SK-N-SH (cell line): ENCODE measurements at regions of chr7 and their contacts with region 1.

Region 1: DNA sequence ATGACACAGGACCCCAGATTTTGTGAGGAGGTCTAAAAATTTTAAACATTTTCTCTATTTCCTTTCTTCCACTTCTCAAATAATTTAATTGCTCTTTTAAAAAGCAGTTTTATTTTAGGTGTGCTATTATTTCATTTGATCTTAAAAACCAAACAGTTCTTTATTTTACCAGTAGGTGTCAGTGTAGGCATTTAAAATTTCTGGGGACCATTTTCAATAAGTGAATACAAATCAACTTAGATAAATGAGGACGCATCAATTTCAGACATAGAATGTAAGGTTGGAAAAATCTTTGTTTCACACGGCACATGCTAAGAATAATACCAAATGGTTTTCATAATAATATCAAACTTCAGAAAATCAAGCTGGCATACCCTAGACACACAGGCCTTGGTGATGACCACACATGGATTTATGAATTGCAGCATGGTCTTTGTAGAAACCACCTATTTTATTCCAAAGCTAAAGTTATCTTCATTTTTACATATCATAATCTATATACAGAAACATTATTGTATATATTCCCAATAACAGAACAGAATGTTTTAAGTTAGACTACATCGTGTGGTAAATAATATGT is 127.6 kb upstream of the SLC26A5 start:
- DNase-seq: peak; percentile 27
- H3K4me3 ChIP-seq: no peak overlapping the region; a peak in 1 of 4 replicates
- H3K27ac ChIP-seq: no peak overlapping the region
- H3K4me1 ChIP-seq: no peaks in the 10 kb centered on the region
- H3K27me3 ChIP-seq: no peaks in the 10 kb centered on the region
- CTCF ChIP-seq: peak; percentile 95
- EP300 ChIP-seq: no peak
- RAD21 ChIP-seq: peak; percentile 85

Region 2: DNA sequence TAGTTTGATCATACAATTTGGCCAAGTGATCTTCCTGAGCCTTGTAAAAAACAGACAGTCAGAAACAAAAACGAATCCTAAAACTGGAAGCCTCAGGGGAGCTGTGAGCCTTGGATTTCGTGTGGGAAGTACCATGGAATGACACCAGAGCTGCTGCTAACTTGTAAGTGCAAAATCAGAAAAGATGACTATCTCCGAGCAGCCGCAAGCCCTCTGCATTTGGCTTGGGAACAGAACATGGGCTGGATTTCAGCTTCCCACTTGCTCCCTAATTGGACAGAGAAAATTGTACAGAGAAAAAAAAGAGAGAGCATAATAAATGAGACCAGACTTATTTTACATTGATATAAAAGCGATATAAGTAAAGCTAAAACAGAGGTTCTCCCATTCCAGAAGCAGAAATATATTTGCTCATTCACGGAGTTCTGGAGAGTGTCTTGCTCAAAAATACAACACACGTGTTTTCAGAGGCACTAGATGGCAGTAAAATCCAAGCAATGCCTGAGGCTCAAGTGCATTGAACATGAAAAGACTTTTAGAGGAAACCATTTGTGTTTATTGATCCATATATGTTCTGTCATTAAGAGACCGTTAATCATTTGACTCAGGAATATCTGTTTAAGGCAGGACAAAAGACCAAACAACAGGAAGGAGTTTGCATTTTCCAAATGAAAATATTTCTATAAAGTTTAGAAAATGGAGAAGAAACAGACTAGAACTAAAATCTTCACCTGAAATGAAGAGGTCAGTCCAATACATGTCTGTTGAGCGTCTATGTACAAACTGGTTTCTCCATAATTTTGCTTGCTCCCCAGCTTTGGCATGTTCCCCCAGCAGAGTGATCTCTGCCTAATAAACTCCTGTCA is 49.3 kb before region 1 on chr7:
- CTCF ChIA-PET with region 1: interaction called, 27 read pairs
- POLR2A ChIA-PET with region 1: no interaction called
- DNase-seq: peak; percentile 72
- H3K4me3 ChIP-seq: no peak overlapping the region; a peak in 1 of 4 replicates
- H3K27ac ChIP-seq: no peak overlapping the region
- H3K4me1 ChIP-seq: peaks cover 0 to 5% of the 10 kb centered on the region in 2 experiments; a peak in 1 of 4 replicates
- H3K27me3 ChIP-seq: no peaks in the 10 kb centered on the region
- CTCF ChIP-seq: peak; percentile 77
- EP300 ChIP-seq: no peak
- RAD21 ChIP-seq: peak; percentile 99

Region 3: GRCh38 chr7:103560136-103560535 is 13.4 kb before region 1 on chr7:
- CTCF ChIA-PET with region 1: interaction called, 26 read pairs
- POLR2A ChIA-PET with region 1: no interaction called
- DNase-seq: no peak
- H3K4me3 ChIP-seq: no peak overlapping the region
- H3K27ac ChIP-seq: no peak overlapping the region
- H3K4me1 ChIP-seq: no peaks in the 10 kb centered on the region
- H3K27me3 ChIP-seq: peaks cover 2% of the 10 kb centered on the region; the same call in 1 of the 2 replicates
- CTCF ChIP-seq: no peak
- EP300 ChIP-seq: no peak
- RAD21 ChIP-seq: no peak

Region 4: DNA sequence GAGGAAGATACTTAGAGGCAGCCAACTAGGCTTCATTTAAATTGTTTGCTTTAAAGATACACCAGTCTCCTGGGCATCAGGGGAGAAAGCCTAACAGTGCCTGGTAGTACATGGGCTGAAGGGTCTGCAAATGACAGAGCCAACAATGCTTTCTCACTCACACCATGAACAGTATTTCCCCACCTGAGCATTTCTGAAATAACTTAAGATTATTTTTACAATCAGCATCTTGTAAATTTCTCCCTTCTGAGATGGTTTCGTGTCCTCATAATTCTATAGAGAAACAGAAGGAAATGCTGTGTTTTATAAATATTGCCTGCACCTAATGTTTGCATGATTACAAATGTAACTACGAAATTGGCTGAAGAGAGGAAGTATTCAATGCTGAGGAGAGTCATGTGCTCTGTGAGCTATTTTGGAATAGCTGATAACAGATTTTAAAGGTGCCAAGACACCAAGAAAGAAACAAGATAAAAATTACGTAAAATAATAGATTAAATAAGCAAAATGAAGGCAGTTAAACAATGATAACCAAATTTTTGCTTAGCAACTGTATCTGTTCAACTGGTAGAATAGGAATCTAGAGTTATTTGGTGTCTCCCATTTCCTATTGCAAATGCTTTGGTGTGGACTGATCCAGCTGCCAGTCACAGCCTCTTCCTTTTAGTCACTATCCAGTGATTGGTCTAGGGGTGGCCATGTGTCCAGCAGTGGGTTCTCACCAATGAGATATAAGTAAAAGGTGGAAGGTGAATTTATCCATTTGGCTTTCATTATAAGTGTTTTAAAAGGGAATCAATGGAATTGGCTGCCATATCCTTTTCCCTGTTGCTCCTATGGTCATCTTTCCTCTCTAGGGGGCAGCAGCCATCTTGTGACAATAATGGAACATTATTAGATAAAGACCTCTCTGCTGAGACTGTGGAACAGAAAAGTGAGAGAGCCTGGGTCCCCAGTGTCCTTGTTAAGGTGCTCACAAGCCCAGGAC is 40.4 kb after region 1 on chr7:
- CTCF ChIA-PET with region 1: interaction called, 16 read pairs
- POLR2A ChIA-PET with region 1: no interaction called
- DNase-seq: peak; percentile 33
- H3K4me3 ChIP-seq: no peak overlapping the region
- H3K27ac ChIP-seq: peak overlapping the region in 1 of 2 experiments; percentile 16; a peak in 1 of 4 replicates
- H3K4me1 ChIP-seq: peaks cover 0 to 2% of the 10 kb centered on the region in 2 experiments; a peak in 2 of 4 replicates
- H3K27me3 ChIP-seq: no peaks in the 10 kb centered on the region
- CTCF ChIP-seq: peak; percentile 59
- EP300 ChIP-seq: no peak
- RAD21 ChIP-seq: peak; percentile 70

Region 5: DNA sequence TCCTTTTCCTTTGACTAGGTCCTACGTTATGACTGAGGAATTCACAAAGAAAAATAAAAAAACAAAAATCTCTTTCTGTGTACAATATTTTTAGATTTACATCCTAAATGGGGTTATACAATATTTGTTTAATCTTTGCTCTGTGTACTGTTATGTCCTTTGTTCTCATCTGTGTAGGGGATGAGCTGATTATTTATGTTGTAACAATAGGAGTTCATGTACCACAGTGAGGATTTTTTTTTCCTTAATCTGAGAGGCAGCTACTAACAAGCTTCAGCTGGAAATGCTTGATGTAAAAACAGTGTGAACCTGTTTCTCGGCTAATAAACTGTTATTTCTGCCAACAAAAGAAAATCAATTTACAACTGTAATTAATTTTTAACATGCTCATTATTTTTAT is 576.3 kb after region 1 on chr7:
- CTCF ChIA-PET with region 1: interaction called, 64 read pairs
- POLR2A ChIA-PET with region 1: no interaction called
- DNase-seq: no peak
- H3K4me3 ChIP-seq: no peak overlapping the region
- H3K27ac ChIP-seq: no peak overlapping the region
- H3K4me1 ChIP-seq: no peaks in the 10 kb centered on the region; a peak in 1 of 4 replicates
- H3K27me3 ChIP-seq: no peaks in the 10 kb centered on the region
- CTCF ChIP-seq: no peak
- EP300 ChIP-seq: no peak
- RAD21 ChIP-seq: no peak

Region 6: DNA sequence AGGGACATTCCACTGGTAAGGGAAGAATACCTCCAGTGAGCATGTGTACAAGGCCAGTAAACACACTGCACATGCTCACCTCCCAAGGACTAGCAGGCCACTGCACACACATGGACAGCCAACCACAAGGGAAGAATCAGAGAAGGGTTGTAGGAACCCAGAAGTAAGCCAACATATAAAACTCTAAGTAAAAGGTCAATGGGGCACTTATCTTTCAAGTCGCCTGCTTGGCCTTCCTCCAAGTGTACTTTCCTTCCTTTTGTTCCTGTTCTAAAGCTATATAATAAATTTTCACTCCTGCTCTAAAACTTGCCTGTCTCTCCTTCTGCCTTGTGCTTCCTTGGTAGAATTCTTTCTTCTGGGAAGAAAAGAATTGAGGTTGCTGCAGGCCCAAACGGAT is 601.2 kb after region 1 on chr7:
- CTCF ChIA-PET with region 1: interaction called, 16 read pairs
- POLR2A ChIA-PET with region 1: no interaction called
- DNase-seq: no peak
- H3K4me3 ChIP-seq: no peak overlapping the region
- H3K27ac ChIP-seq: no peak overlapping the region
- H3K4me1 ChIP-seq: no peaks in the 10 kb centered on the region
- H3K27me3 ChIP-seq: no peaks in the 10 kb centered on the region
- CTCF ChIP-seq: no peak
- EP300 ChIP-seq: no peak
- RAD21 ChIP-seq: no peak

Region 7: DNA sequence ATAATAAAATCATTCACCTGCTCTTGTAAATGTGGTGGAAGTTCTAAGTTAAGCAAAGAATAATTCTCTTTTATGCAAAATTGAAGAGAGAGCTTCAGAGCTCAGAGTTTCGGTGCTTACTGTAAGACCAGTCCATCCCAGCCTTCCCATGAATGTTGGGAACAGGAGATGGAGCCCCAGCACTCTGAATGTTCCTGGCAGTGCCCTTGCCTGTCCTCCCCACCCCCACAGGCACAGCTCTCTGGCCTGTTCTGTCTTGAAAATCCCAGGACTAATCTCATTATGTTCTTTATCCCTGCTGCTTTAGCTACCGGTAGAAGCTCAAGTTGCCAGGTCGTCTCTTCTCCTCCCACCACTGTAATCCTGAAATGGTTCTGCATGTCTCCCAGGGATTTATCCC is 725.8 kb after region 1 on chr7:
- CTCF ChIA-PET with region 1: no interaction called
- POLR2A ChIA-PET with region 1: no interaction called
- DNase-seq: no peak
- H3K4me3 ChIP-seq: no peak overlapping the region
- H3K27ac ChIP-seq: no peak overlapping the region
- H3K4me1 ChIP-seq: no peaks in the 10 kb centered on the region
- H3K27me3 ChIP-seq: no peaks in the 10 kb centered on the region
- CTCF ChIP-seq: no peak
- EP300 ChIP-seq: no peak
- RAD21 ChIP-seq: no peak

Region 8: GRCh38 chr7:104923010-104923421 is 1349.4 kb after region 1 on chr7:
- CTCF ChIA-PET with region 1: interaction called, 10 read pairs
- POLR2A ChIA-PET with region 1: no interaction called
- DNase-seq: peak; percentile 74
- H3K4me3 ChIP-seq: no peak overlapping the region; a peak in 1 of 4 replicates
- H3K27ac ChIP-seq: no peak overlapping the region; a peak in 1 of 4 replicates
- H3K4me1 ChIP-seq: no peaks in the 10 kb centered on the region; a peak in 2 of 4 replicates
- H3K27me3 ChIP-seq: no peaks in the 10 kb centered on the region; the same call in 1 of the 2 replicates
- CTCF ChIP-seq: peak; percentile 92
- EP300 ChIP-seq: 0 out of 4 replicates have a peak, but pooled peaks of 1 of the 2 experiments have one; percentile 12
- RAD21 ChIP-seq: peak; percentile 99